ENCODE measurements at regions of chr11 and their contacts with region 1.

Region 1: DNA sequence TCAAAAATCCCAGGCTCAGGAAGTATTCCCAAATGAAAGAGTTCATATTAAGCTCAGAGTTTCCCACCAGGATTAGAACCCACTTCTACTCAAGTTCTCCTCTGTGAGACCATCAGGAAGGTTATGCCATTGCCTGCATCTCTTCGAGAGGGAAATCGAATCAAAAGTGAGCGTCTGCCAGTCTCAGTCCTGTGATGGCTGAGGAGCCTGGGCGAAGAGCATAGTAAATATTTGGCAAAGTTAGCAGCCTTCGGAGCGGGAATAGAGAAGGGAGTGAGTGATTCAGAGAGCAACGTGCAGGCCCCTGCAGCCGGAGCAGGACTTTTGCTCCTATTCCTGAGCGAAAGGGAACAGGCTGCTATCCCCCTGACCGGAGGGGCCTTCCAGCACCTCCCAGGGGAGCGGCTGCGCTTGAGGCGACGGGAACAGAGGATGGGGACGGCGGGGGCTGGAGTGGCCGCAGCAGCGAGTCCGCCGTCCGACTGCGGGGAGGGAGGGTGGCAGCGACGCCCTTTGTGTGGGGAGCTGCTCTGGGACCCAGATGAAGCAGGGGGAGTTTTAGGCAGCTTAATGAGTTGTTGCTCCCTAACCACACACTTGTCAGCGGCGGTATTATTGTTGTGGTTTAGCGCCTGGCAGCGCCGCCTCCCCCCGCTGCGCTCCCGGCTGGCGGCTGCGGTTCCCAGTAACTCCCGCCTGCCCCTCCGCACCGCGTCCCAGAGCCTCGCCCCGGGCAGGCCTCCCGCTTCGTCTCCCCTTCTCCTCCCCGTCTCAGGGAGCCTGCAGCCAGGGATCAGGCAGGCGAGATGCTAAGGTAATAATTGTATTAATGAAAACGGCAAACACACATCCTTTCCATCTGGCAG is 21.7 kb upstream of the NRGN start:
- DNase-seq: peak in 6 of 9 donors; percentile 12 to 37 (median 24)
- ATAC-seq: peak; percentile 76
- H3K4me3 ChIP-seq: peak overlapping the region; percentile 48
- H3K4me3 Mint-ChIP-seq: peak overlapping the region; percentile 63 to 94 (median 82)
- H3K27ac ChIP-seq: no peak overlapping the region
- H3K27ac Mint-ChIP-seq: peak overlapping the region in 2 of 9 donors; percentile 14 to 43
- H3K4me1 ChIP-seq: peaks cover 10 to 15% of the 10 kb centered on the region in 2 donors
- H3K4me1 Mint-ChIP-seq: peaks cover 14 to 33% (median 21%) of the 10 kb centered on the region in 7 donors
- H3K27me3 ChIP-seq: peaks cover 5 to 6% of the 10 kb centered on the region in 2 donors
- H3K27me3 Mint-ChIP-seq: peaks cover 29 to 78% (median 49%) of the 10 kb centered on the region in 5 donors

Region 2: DNA sequence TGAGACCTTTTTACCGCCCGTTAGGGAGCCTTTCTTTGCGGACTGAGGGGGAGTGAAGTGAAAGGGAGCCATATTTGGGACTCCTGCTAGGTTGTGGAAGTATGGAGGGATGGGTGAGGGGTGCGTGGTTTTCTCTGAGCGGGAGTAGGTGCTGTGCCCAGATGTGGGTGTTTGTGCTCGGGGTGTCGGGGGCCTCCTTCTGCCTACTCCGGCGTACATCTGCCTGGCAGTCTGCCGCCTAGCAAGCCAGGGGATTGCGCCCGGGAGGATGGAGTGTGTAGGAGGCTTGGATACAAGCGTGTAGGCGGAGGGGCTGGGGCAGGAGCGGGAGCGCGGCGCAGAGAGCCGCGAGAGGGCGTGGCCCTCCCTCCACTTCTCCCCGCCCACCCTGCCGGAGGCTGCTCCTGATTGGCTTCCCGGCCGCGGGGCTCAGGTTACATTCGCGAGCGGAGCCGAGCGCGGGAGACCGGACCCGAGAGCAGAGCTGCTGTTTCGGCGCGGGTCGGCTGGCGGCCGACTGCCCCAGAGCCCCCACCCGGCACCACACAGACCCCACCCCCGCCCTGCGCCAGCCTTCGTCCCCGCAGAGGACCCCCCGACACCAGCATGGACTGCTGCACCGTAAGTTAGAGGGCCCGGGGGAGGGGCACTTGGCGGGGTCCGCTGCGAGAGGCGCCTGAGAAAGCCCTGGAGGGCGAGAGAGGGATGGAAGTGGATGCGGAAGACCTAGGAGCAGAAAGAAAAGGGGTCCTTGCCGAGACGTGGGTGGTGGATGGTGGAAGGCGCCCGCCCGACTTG is 21.7 kb after region 1 on chr11 and contains the start of gene NRGN:
- CTCF ChIA-PET with region 1: interaction called, 3 read pairs
- POLR2A ChIA-PET with region 1: no interaction called
- intact Hi-C with region 1: loop called in 1 of 2 experiments (anchors 1 kb)
- DNase-seq: peak; percentile 64 to 84 (median 77)
- ATAC-seq: peak; percentile 94
- H3K4me3 ChIP-seq: peak within 1 kb of the TSS; percentile 63
- H3K4me3 Mint-ChIP-seq: peak within 1 kb of the TSS; percentile 78 to 90 (median 86)
- H3K27ac ChIP-seq: peak within 1 kb of the TSS; percentile 38
- H3K27ac Mint-ChIP-seq: peak within 1 kb of the TSS in 8 of 9 donors; percentile 25 to 75 (median 56)
- H3K4me1 ChIP-seq: peaks cover 0 to 5% of the 10 kb centered on the region in 2 donors
- H3K4me1 Mint-ChIP-seq: peaks cover 18 to 33% (median 19%) of the 10 kb centered on the region in 7 donors
- H3K27me3 ChIP-seq: no peaks in the 10 kb centered on the region
- H3K27me3 Mint-ChIP-seq: peaks cover 0 to 65% (median 9%) of the 10 kb centered on the region in 5 donors
- total RNA-seq, gene NRGN: 1.2 to 48.7 (median 4.9) TPM

Region 3: DNA sequence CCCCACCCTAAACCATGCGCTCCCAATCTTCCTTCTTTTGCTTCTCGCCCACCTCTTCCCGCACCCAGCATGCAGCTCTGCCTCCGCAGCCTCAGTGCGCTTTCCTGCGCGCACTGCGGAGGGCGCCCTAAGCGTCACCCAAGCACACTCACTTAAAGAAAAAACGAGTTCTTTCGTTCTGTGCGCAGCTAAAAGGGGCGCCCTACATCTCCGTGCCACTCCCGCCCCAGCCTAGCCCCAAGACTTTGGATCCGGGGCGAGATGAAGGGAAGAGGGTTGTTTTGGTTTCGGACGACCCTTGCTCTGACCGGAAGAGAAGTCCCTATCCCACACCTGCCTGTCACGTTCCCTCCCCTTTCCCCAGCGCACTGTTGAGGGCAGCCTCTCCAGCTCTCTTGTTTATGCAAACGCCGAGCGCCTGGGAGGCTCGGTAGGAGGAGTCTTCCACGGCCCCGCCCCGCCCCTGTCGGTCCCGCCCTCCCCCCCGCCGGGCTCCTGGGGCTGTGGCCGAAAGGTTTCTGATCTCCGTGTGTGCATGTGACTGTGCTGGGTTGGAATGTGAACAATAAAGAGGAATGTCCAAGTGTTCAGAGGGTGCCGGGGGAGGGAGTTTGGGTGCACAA is 28.7 kb after region 1 on chr11:
- CTCF ChIA-PET with region 1: interaction called, 3 read pairs
- POLR2A ChIA-PET with region 1: interaction called, 3 read pairs
- intact Hi-C with region 1: loop called in 1 of 2 experiments (anchors 2 kb)
- DNase-seq: peak; percentile 66 to 88 (median 85)
- ATAC-seq: peak; percentile 93
- H3K4me3 ChIP-seq: peak overlapping the region; percentile 99
- H3K4me3 Mint-ChIP-seq: peak overlapping the region; percentile 91 to 100 (median 98)
- H3K27ac ChIP-seq: peak overlapping the region; percentile 72
- H3K27ac Mint-ChIP-seq: peak overlapping the region; percentile 91 to 98 (median 96)
- H3K4me1 ChIP-seq: peaks cover 0 to 3% of the 10 kb centered on the region in 2 donors
- H3K4me1 Mint-ChIP-seq: peaks cover 4 to 37% (median 19%) of the 10 kb centered on the region in 7 donors
- H3K27me3 ChIP-seq: no peaks in the 10 kb centered on the region
- H3K27me3 Mint-ChIP-seq: peaks cover 0 to 22% (median 0%) of the 10 kb centered on the region in 5 donors